Activated B cell treated with CpG ODN at 0.5 μM for 24 hours (primary cell): ENCODE measurements at regions of chr17 and their contacts with region 1.

Region 1: GRCh38 chr17:7484067-7484918 is at the start of gene POLR2A:
- DNase-seq: peak; percentile 99
- ATAC-seq: peak; percentile 66
- H3K4me3 Mint-ChIP-seq: peak within 1 kb of the TSS; percentile 98
- H3K27ac Mint-ChIP-seq: peak within 1 kb of the TSS; percentile 100
- H3K4me1 Mint-ChIP-seq: peaks cover 69% of the 10 kb centered on the region
- H3K27me3 Mint-ChIP-seq: no peaks in the 10 kb centered on the region
- CTCF ChIP-seq: no peak
- total RNA-seq, gene POLR2A: 148 and 162 TPM in 2 replicates

Region 2: GRCh38 chr17:7252176-7253043 is 231.9 kb before region 1 on chr17 and contains the start of gene ELP5:
- CTCF ChIA-PET with region 1: no interaction called
- POLR2A ChIA-PET with region 1: interaction called, 4 read pairs
- intact Hi-C with region 1: loop called (anchors 5 kb)
- DNase-seq: no peak
- ATAC-seq: peak; percentile 61
- H3K4me3 Mint-ChIP-seq: peak within 1 kb of the TSS; percentile 98
- H3K27ac Mint-ChIP-seq: peak within 1 kb of the TSS; percentile 100
- H3K4me1 Mint-ChIP-seq: peaks cover 44% of the 10 kb centered on the region
- H3K27me3 Mint-ChIP-seq: no peaks in the 10 kb centered on the region
- CTCF ChIP-seq: no peak
- total RNA-seq, gene ELP5: 49.2 and 53.6 TPM in 2 replicates

Region 3: DNA sequence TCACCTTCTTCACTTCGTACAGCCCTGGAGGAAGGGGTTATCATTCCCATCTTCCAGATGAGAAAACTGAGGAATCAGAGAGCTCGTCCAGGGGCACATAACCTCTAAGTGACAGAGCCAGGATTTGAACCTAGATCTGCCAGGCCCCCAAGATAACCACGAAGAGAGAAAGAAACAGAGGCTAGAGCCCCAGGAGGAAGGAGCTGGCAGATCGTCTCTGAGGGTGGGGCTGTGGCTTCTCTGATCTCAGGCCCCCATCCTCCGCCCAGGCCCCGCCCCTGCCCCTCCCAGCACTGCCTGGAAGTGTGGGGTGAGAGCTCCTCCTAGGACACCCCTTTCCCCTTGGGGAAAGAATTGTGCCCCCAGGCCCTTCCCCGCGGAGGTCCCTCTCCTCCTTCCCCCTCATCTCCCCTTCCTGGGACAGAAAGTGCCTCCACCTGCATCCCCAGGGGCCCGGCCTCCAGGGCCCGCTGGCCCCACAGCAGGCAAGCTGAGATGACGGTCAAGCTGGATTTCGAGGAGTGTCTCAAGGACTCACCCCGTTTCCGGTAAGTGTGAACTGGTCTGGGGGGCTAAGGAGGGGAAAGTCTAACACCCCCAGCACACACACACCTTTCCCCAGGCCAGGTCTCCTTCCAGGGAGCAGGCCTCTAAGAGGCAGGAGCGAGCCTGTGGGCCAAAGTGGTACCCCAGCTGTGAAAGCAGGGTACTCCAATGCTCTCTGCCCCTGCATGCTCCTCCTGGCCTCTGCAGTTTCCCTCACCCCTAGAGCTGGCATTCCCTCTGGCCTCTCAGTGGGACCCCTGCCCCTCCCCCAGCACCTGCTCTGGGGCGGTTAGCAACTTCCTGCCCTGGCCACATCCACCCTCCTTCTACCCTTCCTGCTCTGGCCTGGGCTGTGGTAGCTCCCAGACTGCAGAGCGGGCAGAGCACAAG is 147.8 kb before region 1 on chr17 and contains the start of gene ACAP1:
- CTCF ChIA-PET with region 1: no interaction called
- POLR2A ChIA-PET with region 1: interaction called, 18 read pairs
- intact Hi-C with region 1: no loop called
- DNase-seq: peak; percentile 67
- ATAC-seq: peak; percentile 96
- H3K4me3 Mint-ChIP-seq: peak within 1 kb of the TSS; percentile 85
- H3K27ac Mint-ChIP-seq: peak within 1 kb of the TSS; percentile 98
- H3K4me1 Mint-ChIP-seq: peaks cover 49% of the 10 kb centered on the region
- H3K27me3 Mint-ChIP-seq: no peaks in the 10 kb centered on the region
- CTCF ChIP-seq: no peak
- total RNA-seq, gene ACAP1: 298 and 328 TPM in 2 replicates

Region 4: GRCh38 chr17:7403977-7404736 is 80.1 kb before region 1 on chr17 and contains the start of gene TMEM256:
- CTCF ChIA-PET with region 1: no interaction called
- POLR2A ChIA-PET with region 1: interaction called, 23 read pairs
- intact Hi-C with region 1: loop called (anchors 1 kb)
- DNase-seq: peak; percentile 82
- ATAC-seq: peak; percentile 89
- H3K4me3 Mint-ChIP-seq: peak within 1 kb of the TSS; percentile 97
- H3K27ac Mint-ChIP-seq: peak within 1 kb of the TSS; percentile 94
- H3K4me1 Mint-ChIP-seq: peaks cover 16% of the 10 kb centered on the region
- H3K27me3 Mint-ChIP-seq: peaks cover 12% of the 10 kb centered on the region
- CTCF ChIP-seq: no peak
- total RNA-seq, gene TMEM256: 98.2 and 117 TPM in 2 replicates

Region 5: DNA sequence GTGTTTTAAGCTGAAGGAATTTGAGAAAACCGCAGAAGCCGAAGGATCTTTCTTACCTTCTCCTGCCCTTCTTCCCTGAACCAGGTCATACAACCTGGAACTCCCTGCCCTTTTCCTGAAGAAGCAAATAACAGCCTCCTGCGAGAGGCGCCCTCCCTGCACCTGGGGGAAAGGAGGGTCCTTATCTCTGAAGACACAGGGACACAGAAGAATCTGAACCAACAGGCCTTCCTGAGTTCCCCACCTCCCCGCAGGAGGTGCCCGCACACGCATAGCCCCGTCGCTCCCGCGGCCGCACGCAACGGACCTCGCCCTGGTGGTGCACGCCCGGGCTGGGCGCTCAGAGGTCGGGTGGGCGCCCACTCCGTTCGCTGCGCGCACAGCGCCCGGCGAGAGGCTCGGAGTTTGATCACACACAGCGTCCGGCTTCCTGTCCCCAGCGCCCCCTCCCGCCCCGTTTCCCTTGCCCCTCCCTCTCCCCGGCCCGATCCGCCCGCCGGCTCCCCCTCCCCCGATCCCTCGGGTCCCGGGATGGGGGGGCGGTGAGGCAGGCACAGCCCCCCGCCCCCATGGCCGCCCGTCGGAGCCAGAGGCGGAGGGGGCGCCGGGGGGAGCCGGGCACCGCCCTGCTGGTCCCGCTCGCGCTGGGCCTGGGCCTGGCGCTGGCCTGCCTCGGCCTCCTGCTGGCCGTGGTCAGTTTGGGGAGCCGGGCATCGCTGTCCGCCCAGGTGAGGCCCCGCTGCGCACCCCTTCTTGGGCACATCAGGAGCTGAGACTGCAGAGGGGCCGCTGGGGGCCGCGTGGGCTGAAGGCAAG is 64.5 kb after region 1 on chr17 and contains the start of gene TNFSF12:
- CTCF ChIA-PET with region 1: no interaction called
- POLR2A ChIA-PET with region 1: interaction called, 15 read pairs
- intact Hi-C with region 1: no loop called
- DNase-seq: peak; percentile 55
- ATAC-seq: peak; percentile 58
- H3K4me3 Mint-ChIP-seq: peak within 1 kb of the TSS; percentile 82
- H3K27ac Mint-ChIP-seq: peak within 1 kb of the TSS; percentile 90
- H3K4me1 Mint-ChIP-seq: peaks cover 52% of the 10 kb centered on the region
- H3K27me3 Mint-ChIP-seq: no peaks in the 10 kb centered on the region
- CTCF ChIP-seq: no peak
- total RNA-seq, gene TNFSF12: 25.2 and 30.7 TPM in 2 replicates

Region 6: DNA sequence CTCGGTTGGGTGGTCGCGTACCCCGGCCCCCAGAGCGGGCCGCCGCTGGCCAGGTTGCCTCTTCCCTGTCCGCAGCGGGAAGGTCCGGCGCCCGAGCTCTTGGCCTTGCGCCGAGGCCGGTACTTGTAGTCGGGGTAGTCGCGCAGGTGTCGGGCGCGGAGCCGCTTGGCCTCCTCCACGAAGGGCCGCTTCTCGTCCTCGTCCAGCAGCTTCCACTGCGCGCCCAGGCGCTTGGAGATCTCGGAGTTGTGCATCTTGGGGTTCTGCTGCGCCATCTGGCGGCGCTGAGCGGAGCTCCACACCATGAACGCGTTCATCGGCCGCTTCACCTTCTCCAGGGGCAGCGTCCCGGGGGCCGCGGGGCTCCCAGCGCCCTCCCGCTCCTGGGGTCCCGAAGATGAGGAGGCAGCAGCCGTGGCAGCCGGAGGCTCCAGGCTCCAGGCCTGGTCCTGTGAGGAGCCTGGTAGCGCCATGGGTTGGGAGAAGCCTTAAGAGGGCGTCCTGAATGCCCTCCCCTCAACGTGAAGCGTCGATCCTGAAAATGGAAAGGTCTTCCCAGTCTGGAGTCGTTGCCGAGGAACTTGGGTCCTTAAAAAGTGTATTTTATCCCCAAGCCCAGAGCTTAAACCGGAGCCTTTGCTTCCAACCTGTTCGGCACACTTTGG is 105.0 kb after region 1 on chr17:
- CTCF ChIA-PET with region 1: interaction called, 4 read pairs
- POLR2A ChIA-PET with region 1: interaction called, 36 read pairs
- intact Hi-C with region 1: loop called (anchors 1 kb)
- DNase-seq: peak; percentile 66
- ATAC-seq: peak; percentile 89
- H3K4me3 Mint-ChIP-seq: no peak overlapping the region
- H3K27ac Mint-ChIP-seq: no peak overlapping the region
- H3K4me1 Mint-ChIP-seq: peaks cover 13% of the 10 kb centered on the region
- H3K27me3 Mint-ChIP-seq: no peaks in the 10 kb centered on the region
- CTCF ChIP-seq: peak; percentile 44